ENCODE measurements at regions of chr7 and their contacts with region 1.

Region 1: GRCh38 chr7:129218514-129219062 is 6.2 kb upstream of the AHCYL2 start:
- DNase-seq: peak; percentile 91
- H3K4me3 ChIP-seq: no peak overlapping the region
- H3K27ac ChIP-seq: no peak overlapping the region
- H3K4me1 ChIP-seq: peaks cover 3% of the 10 kb centered on the region
- H3K27me3 ChIP-seq: no peaks in the 10 kb centered on the region
- CTCF ChIP-seq: peak; percentile 90

Region 2: DNA sequence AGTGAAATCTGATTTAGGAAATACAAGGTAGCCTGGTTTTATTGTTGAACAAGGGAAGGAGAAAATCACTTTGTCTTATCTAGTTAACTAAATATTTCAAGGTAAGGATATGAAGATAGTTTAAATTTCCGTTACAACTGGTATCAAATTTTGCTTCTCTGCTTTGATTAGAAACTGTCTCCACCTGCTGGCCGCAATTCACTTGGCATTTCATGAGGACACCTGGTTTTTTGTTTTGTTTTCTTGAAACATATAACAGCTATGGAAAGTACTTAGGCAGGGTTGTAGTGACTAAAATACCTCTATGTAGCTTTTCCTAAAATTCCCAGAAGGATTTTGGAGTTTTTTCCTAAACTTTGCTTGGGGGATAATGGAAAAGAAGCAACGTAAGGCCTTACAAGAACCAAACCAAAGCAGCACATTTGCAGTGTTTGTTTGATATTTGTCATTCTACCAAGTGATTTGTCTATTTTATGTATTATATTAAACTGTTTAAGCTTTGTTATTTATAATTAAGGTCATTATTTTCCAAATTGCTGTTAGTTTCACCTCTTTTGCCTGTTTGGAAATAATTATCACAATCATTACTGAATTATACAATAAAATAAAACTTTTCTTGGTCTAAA is 79.8 kb after region 1 on chr7:
- CTCF ChIA-PET with region 1: interaction called, 16 read pairs
- POLR2A ChIA-PET with region 1: no interaction called
- intact Hi-C with region 1: loop called (anchors 1 kb)
- DNase-seq: peak; percentile 59
- H3K4me3 ChIP-seq: no peak overlapping the region
- H3K27ac ChIP-seq: no peak overlapping the region
- H3K4me1 ChIP-seq: peaks cover 23% of the 10 kb centered on the region
- H3K27me3 ChIP-seq: no peaks in the 10 kb centered on the region
- CTCF ChIP-seq: peak; percentile 84

Region 3: DNA sequence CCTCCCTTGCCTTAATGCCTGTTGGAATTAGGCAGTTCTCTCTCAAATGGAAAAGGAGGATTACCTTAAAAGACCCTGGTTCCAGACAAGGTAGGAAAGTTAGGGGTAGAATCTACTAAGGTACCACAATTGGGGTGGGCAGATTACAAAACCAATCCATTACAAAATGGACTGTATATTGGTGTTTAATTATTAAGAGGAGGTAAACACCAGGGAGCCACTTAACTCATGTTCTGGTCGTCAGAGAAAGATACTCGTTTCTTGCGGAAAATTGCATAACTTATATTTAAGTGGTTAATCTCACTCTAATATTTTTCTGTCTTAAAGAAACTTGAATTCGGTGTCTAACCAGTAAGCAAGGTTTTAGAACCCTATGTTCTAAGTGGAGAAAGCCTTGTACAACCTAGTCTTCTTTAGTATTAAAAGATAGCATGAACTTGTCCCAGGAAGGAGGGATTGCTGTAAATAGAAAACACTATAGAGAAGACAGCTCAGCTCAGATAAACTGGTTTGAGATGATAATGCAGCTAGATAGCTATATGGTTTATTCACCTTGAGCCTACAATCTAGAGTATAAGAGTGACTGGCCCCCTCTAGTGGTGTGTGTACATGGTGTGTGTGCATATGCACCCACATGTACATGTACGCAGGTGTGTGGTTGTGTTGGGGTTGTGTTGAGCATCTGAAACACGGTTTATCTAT is 157.6 kb after region 1 on chr7:
- CTCF ChIA-PET with region 1: interaction called, 6 read pairs
- POLR2A ChIA-PET with region 1: no interaction called
- intact Hi-C with region 1: loop called (anchors 2 kb)
- DNase-seq: peak; percentile 70
- H3K4me3 ChIP-seq: no peak overlapping the region
- H3K27ac ChIP-seq: no peak overlapping the region
- H3K4me1 ChIP-seq: peaks cover 39% of the 10 kb centered on the region
- H3K27me3 ChIP-seq: no peaks in the 10 kb centered on the region
- CTCF ChIP-seq: peak; percentile 86

Region 4: GRCh38 chr7:129644634-129645230 is 426.1 kb after region 1 on chr7:
- CTCF ChIA-PET with region 1: no interaction called
- POLR2A ChIA-PET with region 1: no interaction called
- intact Hi-C with region 1: loop called (anchors 1 kb)
- DNase-seq: peak; percentile 77
- H3K4me3 ChIP-seq: no peak overlapping the region
- H3K27ac ChIP-seq: no peak overlapping the region
- H3K4me1 ChIP-seq: peaks cover 32% of the 10 kb centered on the region
- H3K27me3 ChIP-seq: no peaks in the 10 kb centered on the region
- CTCF ChIP-seq: peak; percentile 61

Measured in A673 (cell line).